ENCODE measurements at regions of chr4 and their contacts with region 1.

Region 1: GRCh38 chr4:99405433-99406115 is 29.6 kb downstream of the ADH7 start:
- DNase-seq: peak; percentile 38
- ATAC-seq: peak; percentile 40
- H3K4me3 ChIP-seq: no peak overlapping the region
- H3K27ac ChIP-seq: peak overlapping the region; percentile 28; the same call in 1 of the 2 replicates
- H3K4me1 ChIP-seq: peaks cover 16% of the 10 kb centered on the region
- H3K27me3 ChIP-seq: no peaks in the 10 kb centered on the region
- CTCF ChIP-seq: peak; percentile 86 to 90 (median 87)
- EP300 ChIP-seq: no peak
- POLR2A ChIP-seq: no peak
- RAD21 ChIP-seq: peak; percentile 97

Region 2: GRCh38 chr4:98143001-98143899 is 1262.3 kb before region 1 on chr4 and contains the start of gene STPG2:
- CTCF ChIA-PET with region 1: interaction called, 4 read pairs
- POLR2A ChIA-PET with region 1: no interaction called
- RAD21 ChIA-PET with region 1: no interaction called
- SMC1A ChIA-PET with region 1: no interaction called
- in situ Hi-C with region 1: no loop called
- intact Hi-C with region 1: loop called (anchors 10 kb)
- DNase-seq: peak; percentile 51
- ATAC-seq: peak; percentile 100
- H3K4me3 ChIP-seq: peak within 1 kb of the TSS; percentile 75
- H3K27ac ChIP-seq: peak within 1 kb of the TSS; percentile 92
- H3K4me1 ChIP-seq: peaks cover 3% of the 10 kb centered on the region
- H3K27me3 ChIP-seq: peaks cover 0 to 2% of the 10 kb centered on the region in 2 experiments; a peak in 1 of 4 replicates
- CTCF ChIP-seq: peak; percentile 33 to 55 (median 44)
- EP300 ChIP-seq: no peak
- POLR2A ChIP-seq: peak; percentile 79
- RAD21 ChIP-seq: 0 out of 2 replicates have a peak, but pooled peaks have one; percentile 12
- polyA plus RNA-seq, gene STPG2: not detected

Region 3: DNA sequence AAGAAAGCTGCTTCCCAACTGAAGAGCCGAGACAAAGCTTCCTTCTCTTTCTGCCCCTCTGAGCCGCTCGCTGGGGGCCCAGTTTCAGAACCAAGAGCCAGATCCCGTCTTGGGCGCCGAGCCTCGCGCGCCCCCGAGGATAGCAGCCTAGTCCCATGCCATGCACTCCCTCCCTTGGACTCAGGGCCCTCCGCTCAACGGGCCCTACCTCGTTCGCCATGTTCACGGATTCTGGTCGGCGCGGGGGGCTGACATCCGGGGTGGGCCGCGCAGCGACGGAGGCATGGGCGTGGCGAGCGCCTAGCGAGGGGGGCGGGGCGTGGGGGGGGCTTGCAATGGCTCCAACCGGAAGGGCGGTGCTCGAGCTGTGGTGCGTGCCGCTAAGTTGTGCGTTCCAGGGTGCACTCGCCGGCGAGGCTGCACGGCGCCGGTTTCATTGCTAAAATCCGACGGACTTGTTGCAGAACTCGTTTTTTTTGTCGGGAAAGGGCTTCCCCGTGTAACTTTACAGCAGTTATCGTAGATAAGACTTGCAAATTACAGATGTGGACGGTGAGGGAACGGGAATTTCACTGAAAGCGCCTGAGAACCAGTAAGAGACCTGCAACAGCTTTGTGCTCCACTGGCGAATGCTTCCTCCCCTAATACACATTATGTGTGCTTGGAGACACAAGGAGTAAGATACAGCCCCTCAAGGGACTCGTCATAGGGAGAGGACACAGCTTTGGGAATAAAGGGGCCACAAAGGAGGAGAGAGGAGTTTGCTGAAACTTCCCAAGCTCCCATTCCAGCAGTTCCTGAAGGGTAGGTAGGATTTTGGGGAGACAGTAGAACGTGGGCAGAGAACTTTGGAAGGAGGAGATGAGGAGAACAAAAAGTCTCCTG is 316.9 kb before region 1 on chr4 and contains the start of gene ADH5:
- CTCF ChIA-PET with region 1: interaction called, 8 read pairs
- POLR2A ChIA-PET with region 1: interaction called, 3 read pairs
- RAD21 ChIA-PET with region 1: interaction called, 17 read pairs
- SMC1A ChIA-PET with region 1: interaction called, 10 read pairs
- in situ Hi-C with region 1: no loop called
- intact Hi-C with region 1: loop called (anchors 1 kb)
- DNase-seq: peak; percentile 51
- ATAC-seq: peak; percentile 95
- H3K4me3 ChIP-seq: peak within 1 kb of the TSS; percentile 90
- H3K27ac ChIP-seq: peak within 1 kb of the TSS; percentile 76
- H3K4me1 ChIP-seq: no peaks in the 10 kb centered on the region
- H3K27me3 ChIP-seq: no peaks in the 10 kb centered on the region
- CTCF ChIP-seq: no peak
- EP300 ChIP-seq: no peak
- POLR2A ChIP-seq: peak; percentile 96
- RAD21 ChIP-seq: no peak
- polyA plus RNA-seq, gene ADH5: 96.3 to 134 TPM

Region 4: DNA sequence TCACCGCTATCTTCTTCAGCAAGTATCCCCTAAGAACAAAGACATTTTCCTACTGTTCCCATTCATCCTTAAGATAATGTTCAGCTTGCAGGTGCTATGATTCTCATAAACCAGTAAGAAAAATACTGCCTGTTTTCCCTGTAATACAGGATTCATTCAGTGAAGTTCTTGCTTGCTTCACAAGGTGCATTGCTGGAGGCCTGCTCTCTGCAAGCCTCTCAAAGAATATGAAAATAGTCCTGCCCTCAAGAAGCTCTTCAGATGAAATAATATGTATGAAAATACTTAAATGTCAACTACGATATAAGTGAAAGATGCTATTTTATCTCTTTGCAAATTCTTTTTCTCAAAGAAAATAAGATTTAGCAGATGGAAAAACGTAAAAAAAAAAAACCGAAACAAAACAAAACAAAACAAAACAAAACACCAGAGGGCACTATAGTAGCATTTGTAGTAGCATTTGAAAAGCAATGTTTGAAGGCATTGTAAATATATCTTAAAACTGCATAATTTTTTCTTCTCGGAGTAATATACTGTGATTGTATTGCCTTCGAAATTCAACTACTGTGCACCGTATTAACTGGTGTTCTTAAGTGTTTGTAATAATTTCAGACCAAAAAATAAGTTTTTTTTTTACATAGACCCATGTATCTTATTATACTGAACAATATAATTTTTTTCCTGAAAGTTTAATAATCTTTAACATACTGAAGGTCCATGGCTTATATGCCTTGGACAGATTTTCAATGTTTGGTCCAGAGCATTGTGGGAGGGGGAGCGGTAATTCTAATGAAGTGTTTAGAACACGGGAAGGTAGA is 287.5 kb before region 1 on chr4:
- CTCF ChIA-PET with region 1: interaction called, 51 read pairs
- POLR2A ChIA-PET with region 1: no interaction called
- RAD21 ChIA-PET with region 1: interaction called, 16 read pairs
- SMC1A ChIA-PET with region 1: interaction called, 17 read pairs
- in situ Hi-C with region 1: loop called (anchors 5 kb)
- intact Hi-C with region 1: loop called (anchors 1 kb)
- DNase-seq: no peak
- ATAC-seq: no peak
- H3K4me3 ChIP-seq: no peak overlapping the region
- H3K27ac ChIP-seq: no peak overlapping the region
- H3K4me1 ChIP-seq: no peaks in the 10 kb centered on the region
- H3K27me3 ChIP-seq: no peaks in the 10 kb centered on the region
- CTCF ChIP-seq: peak in 2 of 3 experiments; percentile 14 to 22; a peak in 1 of 6 replicates
- EP300 ChIP-seq: no peak
- POLR2A ChIP-seq: no peak
- RAD21 ChIP-seq: peak; percentile 37

Region 5: GRCh38 chr4:99382745-99383360 is 22.7 kb before region 1 on chr4:
- CTCF ChIA-PET with region 1: interaction called, 60 read pairs
- POLR2A ChIA-PET with region 1: no interaction called
- RAD21 ChIA-PET with region 1: interaction called, 7 read pairs
- SMC1A ChIA-PET with region 1: interaction called, 30 read pairs
- in situ Hi-C with region 1: no loop called
- intact Hi-C with region 1: no loop called
- DNase-seq: no peak
- ATAC-seq: no peak
- H3K4me3 ChIP-seq: no peak overlapping the region
- H3K27ac ChIP-seq: no peak overlapping the region
- H3K4me1 ChIP-seq: no peaks in the 10 kb centered on the region
- H3K27me3 ChIP-seq: no peaks in the 10 kb centered on the region
- CTCF ChIP-seq: no peak
- EP300 ChIP-seq: no peak
- POLR2A ChIP-seq: no peak
- RAD21 ChIP-seq: no peak

Region 6: GRCh38 chr4:99462875-99463464 is 57.4 kb after region 1 on chr4:
- CTCF ChIA-PET with region 1: interaction called, 14 read pairs
- POLR2A ChIA-PET with region 1: no interaction called
- RAD21 ChIA-PET with region 1: interaction called, 4 read pairs
- SMC1A ChIA-PET with region 1: interaction called, 8 read pairs
- in situ Hi-C with region 1: no loop called
- intact Hi-C with region 1: no loop called
- DNase-seq: peak; percentile 24
- ATAC-seq: peak; percentile 99
- H3K4me3 ChIP-seq: no peak overlapping the region
- H3K27ac ChIP-seq: no peak overlapping the region
- H3K4me1 ChIP-seq: no peaks in the 10 kb centered on the region
- H3K27me3 ChIP-seq: no peaks in the 10 kb centered on the region
- CTCF ChIP-seq: peak; percentile 67 to 89 (median 75); a peak in 5 of 6 replicates
- EP300 ChIP-seq: no peak
- POLR2A ChIP-seq: no peak
- RAD21 ChIP-seq: peak; percentile 96

Region 7: DNA sequence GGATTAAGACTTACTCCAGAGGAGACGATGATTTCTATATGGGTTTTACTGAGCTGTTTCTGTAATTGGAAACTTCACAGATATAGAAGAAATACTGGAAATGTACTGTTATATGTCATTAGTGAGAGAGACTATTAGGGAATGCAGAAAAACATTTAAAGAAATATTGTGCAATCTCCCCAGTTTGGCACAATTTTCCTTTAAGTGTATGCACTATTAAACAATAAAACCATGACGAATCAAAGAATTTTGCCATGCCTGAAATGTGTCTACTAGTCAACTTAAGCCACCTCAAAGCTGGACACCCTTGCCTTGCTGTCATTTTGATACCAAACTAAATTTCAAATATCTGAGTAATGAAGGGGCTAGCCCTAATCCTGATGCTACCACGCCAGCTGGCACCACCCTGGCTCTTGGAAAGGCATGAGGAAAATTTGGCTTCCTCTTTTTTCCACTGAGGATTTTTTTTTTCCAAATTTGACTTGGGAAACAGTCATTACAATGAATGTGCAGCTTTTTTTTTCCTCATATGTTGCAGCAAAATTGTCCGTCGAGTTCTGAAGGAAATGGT is 205.1 kb after region 1 on chr4:
- CTCF ChIA-PET with region 1: no interaction called
- POLR2A ChIA-PET with region 1: no interaction called
- RAD21 ChIA-PET with region 1: no interaction called
- SMC1A ChIA-PET with region 1: no interaction called
- in situ Hi-C with region 1: no loop called
- intact Hi-C with region 1: no loop called
- DNase-seq: no peak
- ATAC-seq: no peak
- H3K4me3 ChIP-seq: no peak overlapping the region
- H3K27ac ChIP-seq: no peak overlapping the region
- H3K4me1 ChIP-seq: no peaks in the 10 kb centered on the region
- H3K27me3 ChIP-seq: no peaks in the 10 kb centered on the region
- CTCF ChIP-seq: no peak
- EP300 ChIP-seq: no peak
- POLR2A ChIP-seq: no peak
- RAD21 ChIP-seq: no peak

Measured in GM12878 (cell line).